ENCODE measurements at regions of chr16 and their contacts with region 1.

Region 1: GRCh38 chr16:48609652-48610029 is 339 bp downstream of the N4BP1 start:
- DNase-seq: peak; percentile 67 to 87
- ATAC-seq: peak; percentile 51 to 69 (median 62)
- H3K4me3 ChIP-seq: peak overlapping the region; percentile 100
- H3K27ac ChIP-seq: peak overlapping the region; percentile 87
- H3K4me1 ChIP-seq: peaks cover 45% of the 10 kb centered on the region
- H3K27me3 ChIP-seq: no peaks in the 10 kb centered on the region
- CTCF ChIP-seq: no peak

Region 2: GRCh38 chr16:48353565-48354163 is 256.0 kb before region 1 on chr16:
- intact Hi-C with region 1: loop called in 1 of 2 experiments (anchors 5 kb)
- DNase-seq: no peak
- ATAC-seq: peak; percentile 75 to 87 (median 76)
- H3K4me3 ChIP-seq: no peak overlapping the region
- H3K27ac ChIP-seq: peak overlapping the region; percentile 58
- H3K4me1 ChIP-seq: peaks cover 14% of the 10 kb centered on the region
- H3K27me3 ChIP-seq: no peaks in the 10 kb centered on the region
- CTCF ChIP-seq: peak; percentile 94

Region 3: DNA sequence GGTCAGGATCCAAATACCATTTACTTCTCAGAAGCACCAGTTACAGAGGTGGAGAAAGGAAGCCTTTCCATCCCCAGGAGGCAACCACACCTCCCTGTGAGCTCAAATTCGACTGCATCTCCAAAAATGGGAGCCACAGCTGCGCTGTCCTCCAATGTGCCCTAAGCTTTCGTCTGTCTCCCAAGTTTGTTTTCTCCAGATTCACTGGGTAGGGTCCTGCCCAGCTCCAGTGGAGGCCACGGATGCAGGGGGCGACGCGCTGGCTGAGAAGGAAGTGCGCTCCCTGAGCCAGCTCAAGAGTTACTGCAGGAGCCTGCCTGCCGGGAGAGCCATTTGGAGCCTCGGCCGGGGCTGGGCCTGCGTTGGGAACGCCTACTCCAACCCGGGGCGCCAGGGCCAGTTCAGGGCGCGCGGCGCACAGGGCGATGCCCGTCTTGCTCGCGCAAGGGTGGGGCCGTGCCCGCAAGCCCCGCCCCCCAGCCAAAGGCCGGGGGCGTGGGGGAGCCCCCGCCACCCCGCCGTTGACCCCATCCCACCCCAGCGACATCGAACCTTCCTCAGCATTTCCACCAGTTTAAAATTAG is 244.0 kb before region 1 on chr16:
- intact Hi-C with region 1: loop called in 1 of 2 experiments (anchors 5 kb)
- DNase-seq: peak; percentile 92 to 94
- ATAC-seq: peak; percentile 96 to 97 (median 96)
- H3K4me3 ChIP-seq: peak overlapping the region; percentile 71
- H3K27ac ChIP-seq: peak overlapping the region; percentile 88
- H3K4me1 ChIP-seq: peaks cover 61% of the 10 kb centered on the region
- H3K27me3 ChIP-seq: no peaks in the 10 kb centered on the region
- CTCF ChIP-seq: no peak

Region 4: GRCh38 chr16:48559462-48560211 is 50.0 kb before region 1 on chr16:
- intact Hi-C with region 1: loop called in 1 of 2 experiments (anchors 5 kb)
- DNase-seq: no peak
- ATAC-seq: peak; percentile 12 to 60 (median 46)
- H3K4me3 ChIP-seq: no peak overlapping the region
- H3K27ac ChIP-seq: peak overlapping the region; percentile 61
- H3K4me1 ChIP-seq: peaks cover 82% of the 10 kb centered on the region
- H3K27me3 ChIP-seq: no peaks in the 10 kb centered on the region
- CTCF ChIP-seq: no peak

Measured in psoas muscle (tissue), 8 donors.